PC-3 (cell line): ENCODE measurements at regions of chr1 and their contacts with region 1.

Region 1: GRCh38 chr1:172398970-172399755 is 21.3 kb upstream of the C1orf105 start:
- DNase-seq: peak; percentile 100
- ATAC-seq: peak; percentile 91
- H3K4me3 ChIP-seq: peak overlapping the region; percentile 1; the same call in 1 of the 2 replicates
- H3K27ac ChIP-seq: peak overlapping the region; percentile 59
- H3K4me1 ChIP-seq: peaks cover 49% of the 10 kb centered on the region
- H3K27me3 ChIP-seq: no peaks in the 10 kb centered on the region
- CTCF ChIP-seq: peak; percentile 99

Region 2: GRCh38 chr1:171434717-171435346 is 964.3 kb before region 1 on chr1:
- CTCF ChIA-PET with region 1: no interaction called
- POLR2A ChIA-PET with region 1: no interaction called
- intact Hi-C with region 1: loop called (anchors 1 kb)
- DNase-seq: peak; percentile 92
- ATAC-seq: peak; percentile 19
- H3K4me3 ChIP-seq: peak overlapping the region; percentile 48
- H3K27ac ChIP-seq: peak overlapping the region; percentile 91
- H3K4me1 ChIP-seq: peaks cover 55% of the 10 kb centered on the region
- H3K27me3 ChIP-seq: no peaks in the 10 kb centered on the region
- CTCF ChIP-seq: no peak

Region 3: DNA sequence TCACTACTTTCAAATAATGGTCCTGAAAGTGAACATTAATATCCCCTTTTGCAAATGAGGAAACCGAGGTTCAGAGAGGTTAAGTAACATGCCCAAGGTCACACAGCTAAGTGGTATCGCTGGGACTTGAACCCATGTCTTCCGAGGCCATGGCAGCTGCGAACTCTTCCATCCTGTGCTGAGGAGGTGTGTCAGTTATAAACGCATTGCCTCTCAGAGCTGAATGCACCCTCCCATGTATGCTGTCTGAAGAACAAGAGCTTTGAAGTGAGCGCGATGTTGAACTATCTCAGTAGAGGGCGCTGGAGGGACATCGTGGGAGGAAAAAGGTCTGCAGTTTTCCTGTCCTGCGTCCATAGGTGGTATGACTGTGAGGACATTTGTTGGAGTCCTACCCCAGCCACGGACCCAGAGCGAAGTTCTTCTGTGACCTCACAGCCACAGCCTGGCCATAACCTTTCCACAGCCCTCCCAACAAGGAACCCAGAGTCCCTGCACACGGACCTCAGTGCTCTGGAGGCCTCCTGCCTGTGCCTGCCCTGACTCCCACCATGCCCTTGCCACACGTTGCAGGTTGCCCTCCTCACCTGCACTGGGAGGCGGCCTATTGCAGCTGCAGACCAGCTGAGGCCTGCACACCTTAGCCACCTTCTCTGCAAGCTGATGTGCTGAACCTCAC is 754.2 kb before region 1 on chr1:
- CTCF ChIA-PET with region 1: interaction called, 5 read pairs
- POLR2A ChIA-PET with region 1: no interaction called
- intact Hi-C with region 1: loop called (anchors 10 kb)
- DNase-seq: peak; percentile 100
- ATAC-seq: peak; percentile 89
- H3K4me3 ChIP-seq: no peak overlapping the region
- H3K27ac ChIP-seq: no peak overlapping the region
- H3K4me1 ChIP-seq: no peaks in the 10 kb centered on the region
- H3K27me3 ChIP-seq: peaks cover 11% of the 10 kb centered on the region
- CTCF ChIP-seq: peak; percentile 99

Region 4: DNA sequence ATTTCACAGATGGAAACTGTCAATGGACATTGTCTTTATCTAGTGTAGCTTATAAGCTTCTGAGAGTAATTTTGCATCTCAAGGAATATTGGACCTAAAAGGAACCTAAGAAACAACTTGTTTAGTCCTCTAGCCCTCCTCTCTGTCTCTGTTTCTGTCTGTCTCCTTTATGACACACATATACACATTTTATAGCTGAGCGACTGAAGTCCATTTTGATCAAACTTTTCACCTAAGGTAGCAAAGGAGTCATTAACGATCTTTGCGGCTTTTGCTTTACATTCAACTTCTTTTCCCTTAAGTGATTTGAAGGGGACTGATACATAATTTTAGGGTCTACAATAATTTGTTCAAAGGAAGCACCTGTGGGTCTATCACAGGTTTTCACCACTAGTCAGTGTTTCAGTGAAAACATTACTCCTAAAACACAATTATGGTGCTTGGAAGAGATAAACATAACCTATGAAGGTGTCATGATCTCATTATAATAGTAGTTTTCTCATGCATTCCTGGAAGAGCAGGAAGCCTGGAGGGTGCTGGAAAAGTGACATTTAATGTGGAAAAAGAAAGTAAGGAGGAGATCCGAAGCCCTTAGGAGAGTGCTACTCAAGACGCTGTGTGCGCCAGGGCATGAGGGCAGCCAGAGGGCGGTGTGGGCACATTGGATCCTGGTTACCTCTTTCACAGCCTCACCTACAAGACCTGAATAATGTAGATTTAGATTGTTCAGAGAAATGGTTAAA is 309.2 kb before region 1 on chr1:
- CTCF ChIA-PET with region 1: interaction called, 4 read pairs
- POLR2A ChIA-PET with region 1: no interaction called
- intact Hi-C with region 1: loop called (anchors 1 kb)
- DNase-seq: peak; percentile 94
- ATAC-seq: peak; percentile 100
- H3K4me3 ChIP-seq: peak overlapping the region; percentile 10; the same call in 1 of the 2 replicates
- H3K27ac ChIP-seq: no peak overlapping the region
- H3K4me1 ChIP-seq: no peaks in the 10 kb centered on the region
- H3K27me3 ChIP-seq: no peaks in the 10 kb centered on the region
- CTCF ChIP-seq: peak; percentile 100

Region 5: DNA sequence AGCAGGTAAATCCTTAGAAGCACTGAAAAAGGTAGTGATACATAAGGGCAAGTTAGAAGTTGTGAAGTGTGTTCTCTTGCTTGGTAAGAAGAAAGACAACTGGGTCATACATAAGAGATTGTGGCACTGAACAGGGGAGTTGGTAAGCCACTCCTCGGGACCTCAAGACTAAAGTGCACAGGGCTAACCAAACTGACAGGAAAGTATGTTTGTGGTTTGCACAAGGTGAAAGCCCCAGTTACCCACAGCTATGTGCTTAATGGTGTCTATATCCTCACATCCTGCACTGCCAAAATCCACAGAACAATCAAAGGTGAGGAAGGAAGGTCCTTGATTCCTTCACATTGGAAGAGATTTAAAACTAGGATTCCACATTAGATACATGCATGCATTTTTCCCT is 281.4 kb before region 1 on chr1:
- CTCF ChIA-PET with region 1: no interaction called
- POLR2A ChIA-PET with region 1: no interaction called
- intact Hi-C with region 1: no loop called
- DNase-seq: no peak
- ATAC-seq: no peak
- H3K4me3 ChIP-seq: no peak overlapping the region
- H3K27ac ChIP-seq: no peak overlapping the region
- H3K4me1 ChIP-seq: no peaks in the 10 kb centered on the region
- H3K27me3 ChIP-seq: no peaks in the 10 kb centered on the region
- CTCF ChIP-seq: no peak

Region 6: GRCh38 chr1:172269644-172270043 is 129.5 kb before region 1 on chr1:
- CTCF ChIA-PET with region 1: interaction called, 3 read pairs
- POLR2A ChIA-PET with region 1: no interaction called
- intact Hi-C with region 1: loop called (anchors 1 kb)
- DNase-seq: no peak
- ATAC-seq: no peak
- H3K4me3 ChIP-seq: no peak overlapping the region
- H3K27ac ChIP-seq: no peak overlapping the region
- H3K4me1 ChIP-seq: peaks cover 19% of the 10 kb centered on the region
- H3K27me3 ChIP-seq: no peaks in the 10 kb centered on the region
- CTCF ChIP-seq: no peak

Region 7: DNA sequence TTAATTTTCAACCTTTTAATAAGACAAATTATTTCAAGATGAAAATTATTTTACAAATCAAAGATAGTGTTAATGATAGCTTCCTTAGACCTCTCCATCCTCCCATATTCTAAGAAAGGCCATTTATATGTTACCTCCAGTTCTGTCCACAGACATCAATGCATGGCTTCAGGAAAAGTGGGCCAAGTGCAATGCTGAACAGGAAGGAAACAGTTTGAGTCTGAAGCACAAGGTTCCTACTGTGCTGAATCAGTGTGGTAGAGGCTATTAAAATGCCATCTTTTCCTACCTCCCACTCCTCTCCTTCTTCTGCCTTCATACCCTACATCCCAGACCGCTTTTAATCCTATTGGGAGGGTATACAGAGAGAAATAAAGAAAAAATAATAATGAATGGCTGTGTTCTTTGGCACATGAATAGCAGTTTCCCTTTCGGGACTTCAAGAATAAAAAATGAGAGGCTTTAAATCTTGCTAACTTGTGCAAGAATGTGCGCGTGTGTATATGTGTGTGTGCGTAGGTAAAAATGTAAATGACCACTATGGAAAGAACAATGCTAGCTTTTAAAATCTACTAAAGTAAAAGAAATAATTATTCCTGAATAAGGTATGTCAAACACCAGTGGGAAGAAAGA is 41.3 kb before region 1 on chr1:
- CTCF ChIA-PET with region 1: interaction called, 17 read pairs
- POLR2A ChIA-PET with region 1: interaction called, 3 read pairs
- intact Hi-C with region 1: loop called (anchors 1 kb)
- DNase-seq: no peak
- ATAC-seq: no peak
- H3K4me3 ChIP-seq: peak overlapping the region; percentile 51; the same call in 1 of the 2 replicates
- H3K27ac ChIP-seq: peak overlapping the region; percentile 84
- H3K4me1 ChIP-seq: peaks cover 69% of the 10 kb centered on the region
- H3K27me3 ChIP-seq: no peaks in the 10 kb centered on the region
- CTCF ChIP-seq: no peak

Region 8: GRCh38 chr1:172423336-172423735 is 24.2 kb after region 1 on chr1:
- CTCF ChIA-PET with region 1: no interaction called
- POLR2A ChIA-PET with region 1: no interaction called
- intact Hi-C with region 1: no loop called
- DNase-seq: no peak
- ATAC-seq: no peak
- H3K4me3 ChIP-seq: no peak overlapping the region
- H3K27ac ChIP-seq: no peak overlapping the region
- H3K4me1 ChIP-seq: no peaks in the 10 kb centered on the region
- H3K27me3 ChIP-seq: no peaks in the 10 kb centered on the region
- CTCF ChIP-seq: no peak

Region 9: DNA sequence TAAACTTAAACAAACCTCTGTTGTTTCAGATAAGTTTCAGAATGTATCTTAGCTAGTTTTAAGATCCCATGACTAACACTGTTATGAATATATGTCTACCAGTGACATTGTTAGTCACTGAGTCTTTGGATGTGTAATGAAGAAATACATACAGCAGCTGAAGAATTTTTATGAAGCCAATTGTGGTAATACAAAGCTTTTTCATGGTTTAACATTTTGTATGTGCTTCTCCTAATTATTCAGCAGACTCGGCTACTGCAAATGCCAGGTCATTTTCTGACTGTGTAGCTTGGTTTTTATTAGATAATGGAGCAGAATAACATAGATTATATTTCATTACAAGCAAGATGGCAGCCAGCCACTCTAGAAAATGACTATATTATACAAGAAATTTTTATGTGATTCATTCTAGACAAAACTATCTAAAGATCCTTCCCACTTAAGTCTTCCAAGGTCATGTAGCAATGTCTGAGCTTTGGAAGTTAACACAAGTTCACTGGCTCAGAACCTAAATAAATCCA is 503.8 kb after region 1 on chr1:
- CTCF ChIA-PET with region 1: no interaction called
- POLR2A ChIA-PET with region 1: no interaction called
- intact Hi-C with region 1: no loop called
- DNase-seq: peak; percentile 98
- ATAC-seq: peak; percentile 84
- H3K4me3 ChIP-seq: no peak overlapping the region
- H3K27ac ChIP-seq: peak overlapping the region; percentile 54
- H3K4me1 ChIP-seq: peaks cover 47% of the 10 kb centered on the region
- H3K27me3 ChIP-seq: no peaks in the 10 kb centered on the region
- CTCF ChIP-seq: no peak